Gastrocnemius medialis (tissue), 4 donors: ENCODE measurements at regions of chr14 and their contacts with region 1.

Region 1: DNA sequence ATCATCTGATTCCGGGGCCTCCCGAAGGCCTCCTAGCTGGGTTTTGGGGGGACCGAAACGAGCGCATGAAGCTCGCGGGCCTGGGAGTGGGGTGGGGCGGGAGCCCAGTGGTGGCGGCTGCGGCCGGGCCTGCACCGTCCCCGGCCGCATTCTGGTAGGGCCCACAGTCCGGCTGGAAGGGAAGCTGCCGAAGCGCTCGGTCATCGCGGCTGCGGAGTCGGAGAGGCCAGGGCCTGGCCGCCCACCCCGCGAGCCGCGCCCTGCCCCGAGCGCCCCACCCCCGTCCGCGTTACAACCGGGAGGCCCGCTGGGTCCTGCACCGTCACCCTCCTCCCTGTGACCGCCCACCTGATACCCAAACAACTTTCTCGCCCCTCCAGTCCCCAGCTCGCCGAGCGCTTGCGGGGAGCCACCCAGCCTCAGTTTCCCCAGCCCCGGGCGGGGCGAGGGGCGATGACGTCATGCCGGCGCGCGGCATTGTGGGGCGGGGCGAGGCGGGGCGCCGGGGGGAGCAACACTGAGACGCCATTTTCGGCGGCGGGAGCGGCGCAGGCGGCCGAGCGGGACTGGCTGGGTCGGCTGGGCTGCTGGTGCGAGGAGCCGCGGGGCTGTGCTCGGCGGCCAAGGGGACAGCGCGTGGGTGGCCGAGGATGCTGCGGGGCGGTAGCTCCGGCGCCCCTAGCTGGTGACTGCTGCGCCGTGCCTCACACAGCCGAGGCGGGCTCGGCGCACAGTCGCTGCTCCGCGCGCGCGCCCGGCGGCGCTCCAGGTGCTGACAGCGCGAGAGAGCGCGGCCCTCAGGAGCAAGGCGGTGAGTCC is at the start of gene KLC1:
- DNase-seq: peak; percentile 69 to 80
- ATAC-seq: peak; percentile 81 to 87
- H3K4me3 ChIP-seq: peak within 1 kb of the TSS; percentile 77 to 97 (median 86)
- H3K27ac ChIP-seq: peak within 1 kb of the TSS; percentile 96 to 100 (median 98)
- H3K4me1 ChIP-seq: peaks cover 36 to 42% of the 10 kb centered on the region in 2 donors
- H3K27me3 ChIP-seq: no peaks in the 10 kb centered on the region
- CTCF ChIP-seq: no peak
- POLR2A ChIP-seq: peak; percentile 95 to 96
- total RNA-seq, gene KLC1: 217 to 398 (median 309) TPM

Region 2: DNA sequence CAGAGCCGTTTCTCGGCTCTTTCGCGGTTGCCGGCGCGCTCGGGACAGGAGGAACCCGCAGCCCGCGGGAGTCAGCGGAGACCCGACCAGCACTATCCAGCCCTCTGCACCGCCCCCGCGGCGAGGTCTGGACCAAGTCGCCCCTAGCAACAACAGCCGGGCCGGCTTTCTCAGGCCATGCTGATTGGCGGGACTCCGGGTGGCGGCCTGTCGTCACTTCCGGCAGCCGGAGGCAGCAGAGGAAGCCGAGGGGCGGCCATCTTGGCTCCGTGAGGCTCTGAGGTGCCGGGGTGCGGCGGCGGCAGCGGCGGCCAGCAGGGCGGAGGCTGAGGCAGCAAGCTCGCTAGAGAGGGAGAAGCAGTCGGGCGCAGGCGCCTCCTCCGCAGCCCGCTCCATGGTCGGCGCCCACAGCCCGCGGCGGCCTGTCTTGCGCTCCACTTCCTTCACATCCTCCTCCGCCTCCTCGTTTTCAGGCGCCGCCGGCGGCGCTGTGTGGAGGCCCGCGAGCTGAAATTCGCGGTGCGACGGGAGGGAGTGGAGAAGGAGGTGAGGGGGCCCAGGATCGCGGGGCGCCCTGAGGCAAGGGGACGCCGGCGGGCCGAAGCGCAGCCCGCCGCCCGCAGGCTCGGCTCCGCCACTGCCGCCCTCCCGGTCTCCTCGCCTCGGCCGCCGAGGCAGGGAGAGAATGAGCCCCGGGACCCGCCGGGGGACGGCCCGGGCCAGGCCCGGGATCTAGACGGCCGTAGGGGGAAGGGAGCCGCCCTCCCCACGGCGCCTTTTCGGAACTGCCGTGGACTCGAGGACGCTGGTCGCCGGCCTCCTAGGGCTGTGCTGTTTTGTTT is 243.5 kb before region 1 on chr14 and contains the start of gene MARK3:
- in situ Hi-C with region 1: no loop called
- intact Hi-C with region 1: loop called (anchors 5 kb)
- DNase-seq: peak; percentile 95 to 96
- ATAC-seq: peak; percentile 90
- H3K4me3 ChIP-seq: peak within 1 kb of the TSS; percentile 78 to 100 (median 87)
- H3K27ac ChIP-seq: peak within 1 kb of the TSS; percentile 94 to 100 (median 98)
- H3K4me1 ChIP-seq: peaks cover 25% of the 10 kb centered on the region in 2 donors
- H3K27me3 ChIP-seq: no peaks in the 10 kb centered on the region
- CTCF ChIP-seq: peak; percentile 33 to 50 (median 36)
- POLR2A ChIP-seq: peak; percentile 93 to 96
- total RNA-seq, gene MARK3: 60.2 to 73.1 (median 71.6) TPM

Region 3: DNA sequence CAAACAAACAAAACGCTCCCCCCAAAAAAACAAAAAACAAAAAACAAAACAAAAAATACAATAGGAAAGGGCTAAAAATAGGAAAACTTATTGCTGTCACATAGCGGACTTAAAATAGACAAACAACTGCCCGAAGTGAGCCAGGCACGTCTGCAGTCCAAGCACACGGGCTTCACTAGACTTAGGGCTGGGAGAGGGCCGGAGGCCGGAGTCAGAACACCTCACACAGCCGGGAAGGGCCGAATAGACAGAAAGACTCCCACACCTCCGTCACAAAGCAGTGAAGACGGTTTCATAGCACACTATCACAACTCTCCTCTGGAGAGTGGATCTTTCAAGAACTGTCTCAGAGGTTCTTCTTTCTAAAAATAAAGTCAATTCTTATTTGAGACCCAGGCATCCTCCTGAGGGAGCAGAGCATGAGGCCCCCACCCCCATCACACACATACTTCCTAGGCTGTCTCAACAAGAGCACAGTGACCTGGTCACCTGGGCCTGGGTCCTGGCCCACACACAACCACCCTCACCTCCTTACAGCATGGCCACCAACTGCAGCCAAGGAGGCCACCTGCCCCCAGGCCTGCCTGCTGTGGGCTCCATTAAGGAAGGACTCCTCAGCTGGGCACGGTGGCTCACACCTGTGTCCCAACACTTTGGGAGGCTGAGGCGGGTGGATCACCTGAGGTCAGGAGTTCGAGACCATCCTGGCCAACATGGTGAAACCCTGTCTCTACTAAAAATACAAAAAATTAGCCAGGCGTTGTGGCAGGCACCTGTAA is 73.1 kb before region 1 on chr14:
- in situ Hi-C with region 1: no loop called
- intact Hi-C with region 1: no loop called
- DNase-seq: no peak
- ATAC-seq: peak in 1 of 2 donors; percentile 37
- H3K4me3 ChIP-seq: no peak overlapping the region
- H3K27ac ChIP-seq: peak overlapping the region; percentile 74 to 97 (median 86)
- H3K4me1 ChIP-seq: peaks cover 82 to 89% of the 10 kb centered on the region in 2 donors
- H3K27me3 ChIP-seq: no peaks in the 10 kb centered on the region
- CTCF ChIP-seq: no peak
- POLR2A ChIP-seq: peak; percentile 33 to 67

Region 4: DNA sequence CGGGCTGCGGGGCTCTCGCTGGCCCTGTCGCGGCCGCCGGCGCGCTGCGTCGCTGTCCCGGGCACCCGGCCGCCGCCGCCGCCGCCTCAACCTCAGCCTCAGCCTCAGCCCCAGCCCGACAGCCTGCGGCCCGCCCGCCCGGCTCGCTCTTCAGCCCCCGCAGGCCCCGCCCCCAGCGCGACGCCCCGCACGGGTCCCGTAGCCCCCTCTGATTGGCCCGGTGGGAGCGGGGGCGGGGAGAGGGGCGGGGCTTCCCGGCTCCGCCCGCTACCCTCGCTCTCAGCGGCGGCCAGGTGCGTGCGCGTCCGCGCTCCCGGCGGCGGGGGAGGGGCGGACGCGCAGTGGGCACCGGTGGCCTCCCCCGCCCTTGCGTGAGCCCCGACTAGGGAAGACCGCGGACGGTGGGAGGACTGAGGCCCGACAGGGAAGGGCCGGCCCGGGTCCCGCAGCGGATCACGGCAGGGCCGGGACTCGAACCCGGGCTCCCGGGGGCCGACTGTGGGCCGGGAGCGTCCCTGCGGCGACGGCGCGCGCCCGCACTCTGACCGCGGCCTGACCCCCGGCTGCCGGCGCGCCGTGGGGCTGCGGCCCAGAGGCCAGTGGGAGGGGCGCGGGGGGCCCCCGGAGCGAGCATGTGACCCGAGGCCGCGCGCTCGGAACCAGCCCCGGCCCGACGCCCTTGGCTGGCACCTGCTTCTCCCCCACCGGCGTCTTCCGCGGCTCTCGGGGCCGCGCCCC is 218.7 kb after region 1 on chr14 and contains the start of gene PPP1R13B:
- in situ Hi-C with region 1: no loop called
- intact Hi-C with region 1: loop called (anchors 1 kb)
- DNase-seq: peak; percentile 88 to 89
- ATAC-seq: peak; percentile 88 to 90
- H3K4me3 ChIP-seq: peak within 1 kb of the TSS; percentile 60 to 86 (median 76)
- H3K27ac ChIP-seq: peak within 1 kb of the TSS; percentile 73 to 87 (median 84)
- H3K4me1 ChIP-seq: peaks cover 12 to 14% of the 10 kb centered on the region in 2 donors
- H3K27me3 ChIP-seq: no peaks in the 10 kb centered on the region
- CTCF ChIP-seq: peak in 2 of 5 experiments; percentile 10 to 24
- POLR2A ChIP-seq: peak; percentile 80 to 85
- total RNA-seq, gene PPP1R13B: 10.4 to 24.6 (median 11.8) TPM